Activated CD4-positive, alpha-beta T cell treated with anti-CD3 and anti-CD28 coated beads, Interleukin-2, amount 10 ng/mL, durations not matched to agents 24 days and 14 days (primary cell): ENCODE measurements at regions of chr13 and their contacts with region 1.

Region 1: GRCh38 chr13:49606747-49607648 is 21.3 kb upstream of the ARL11 start:
- DNase-seq: peak; percentile 93
- H3K4me3 Mint-ChIP-seq: peak overlapping the region; percentile 77
- H3K27ac Mint-ChIP-seq: peak overlapping the region; percentile 64
- H3K4me1 Mint-ChIP-seq: peaks cover 2% of the 10 kb centered on the region
- H3K27me3 Mint-ChIP-seq: peaks cover 3% of the 10 kb centered on the region

Region 2: GRCh38 chr13:49421391-49421790 is 185.6 kb before region 1 on chr13:
- intact Hi-C with region 1: loop called (anchors 1 kb)
- DNase-seq: peak; percentile 74
- H3K4me3 Mint-ChIP-seq: no peak overlapping the region
- H3K27ac Mint-ChIP-seq: no peak overlapping the region
- H3K4me1 Mint-ChIP-seq: no peaks in the 10 kb centered on the region
- H3K27me3 Mint-ChIP-seq: no peaks in the 10 kb centered on the region